RWPE1 (cell line): ENCODE measurements at regions of chr3 and their contacts with region 1.

Region 1: GRCh38 chr3:70774641-70775040 is 462.2 kb upstream of the MDFIC2 start:
- DNase-seq: no peak
- H3K27ac ChIP-seq: no peak overlapping the region
- CTCF ChIP-seq: no peak

Region 2: DNA sequence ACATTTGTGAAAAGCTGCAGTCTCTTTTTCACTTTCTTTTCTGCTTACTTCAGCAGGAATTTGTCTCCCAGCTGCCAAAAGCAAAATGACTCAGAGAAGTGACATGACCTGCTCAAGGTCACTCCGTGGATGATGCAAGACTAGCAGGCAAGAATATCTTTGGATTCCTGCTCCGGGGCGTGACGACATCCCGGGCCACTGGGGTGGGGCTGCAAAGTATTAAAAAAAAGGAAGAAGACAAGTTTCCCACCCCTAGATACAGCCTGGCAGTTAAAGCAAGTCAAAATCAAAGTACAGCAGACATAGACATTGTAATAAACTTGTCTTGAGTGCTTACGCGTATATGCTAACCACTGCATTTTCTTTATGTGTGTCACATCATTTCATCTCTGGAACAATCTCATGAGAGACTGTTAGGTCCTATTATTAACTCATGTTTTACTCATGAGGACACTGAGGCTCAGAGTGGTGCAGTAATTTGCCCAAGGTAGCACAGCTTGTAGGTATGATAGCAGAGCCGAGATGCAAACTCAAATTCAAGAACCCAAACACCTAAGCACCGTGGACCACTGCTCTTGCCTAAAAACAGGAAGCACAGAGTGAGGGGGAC is 1495.5 kb after region 1 on chr3:
- CTCF ChIA-PET with region 1: interaction called, 11 read pairs
- POLR2A ChIA-PET with region 1: no interaction called
- DNase-seq: peak; percentile 58
- H3K27ac ChIP-seq: peak overlapping the region; percentile 70
- CTCF ChIP-seq: no peak